Naive thymus-derived CD4-positive, alpha-beta T cell (primary cell): ENCODE measurements at regions of chr6 and their contacts with region 1.

Region 1: DNA sequence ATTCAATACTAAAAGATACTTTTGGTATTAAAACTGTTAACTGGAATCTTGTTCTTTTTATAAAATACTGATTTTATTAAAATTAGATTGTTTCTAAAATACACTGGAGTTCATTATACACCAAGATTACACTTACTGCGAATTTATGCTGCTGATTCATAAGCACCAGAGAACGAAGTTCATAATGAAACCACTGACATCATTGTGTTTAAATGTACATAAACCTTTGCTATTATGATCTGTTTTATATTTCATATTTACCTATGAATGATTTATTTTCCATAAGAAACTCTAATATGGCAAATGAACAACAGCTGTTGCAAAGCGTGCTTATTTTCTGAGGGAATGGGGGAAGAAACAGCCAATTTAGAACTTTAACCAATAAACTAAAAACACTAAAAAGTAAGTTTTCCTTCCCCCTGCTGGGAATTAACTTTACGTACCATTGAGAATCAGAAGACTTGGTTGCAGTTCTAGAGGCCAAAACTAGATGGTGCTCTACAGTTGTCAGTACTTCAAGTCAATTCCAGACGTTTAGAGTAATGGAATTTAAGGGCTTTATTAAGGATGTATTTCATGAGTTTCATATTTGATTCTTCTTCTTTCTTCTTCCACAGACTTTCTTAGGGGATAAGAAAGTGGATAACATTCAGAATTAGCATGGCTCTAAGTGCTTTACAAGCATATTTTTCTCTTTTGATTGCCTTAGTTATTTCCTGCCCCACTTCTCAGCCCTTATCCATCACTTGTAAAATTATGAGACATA is 30.8 kb upstream of the COL19A1 start:
- DNase-seq: peak in 4 of 9 donors; percentile 11 to 41 (median 26)
- ATAC-seq: peak; percentile 84
- H3K4me3 ChIP-seq: no peak overlapping the region
- H3K4me3 Mint-ChIP-seq: peak overlapping the region in 1 of 10 donors; percentile 21
- H3K27ac ChIP-seq: no peak overlapping the region
- H3K27ac Mint-ChIP-seq: no peak overlapping the region
- H3K4me1 ChIP-seq: no peaks in the 10 kb centered on the region
- H3K4me1 Mint-ChIP-seq: peaks cover 0 to 7% (median 2%) of the 10 kb centered on the region in 7 donors
- H3K27me3 ChIP-seq: no peaks in the 10 kb centered on the region
- H3K27me3 Mint-ChIP-seq: peaks cover 0 to 52% (median 11%) of the 10 kb centered on the region in 5 donors

Region 2: GRCh38 chr6:69732640-69733039 is 103.0 kb before region 1 on chr6:
- CTCF ChIA-PET with region 1: no interaction called
- POLR2A ChIA-PET with region 1: no interaction called
- intact Hi-C with region 1: loop called in 1 of 2 experiments (anchors 1 kb)
- DNase-seq: peak in 5 of 9 donors; percentile 3 to 25 (median 10)
- ATAC-seq: no peak
- H3K4me3 ChIP-seq: no peak overlapping the region
- H3K4me3 Mint-ChIP-seq: no peak overlapping the region
- H3K27ac ChIP-seq: no peak overlapping the region
- H3K27ac Mint-ChIP-seq: no peak overlapping the region
- H3K4me1 ChIP-seq: no peaks in the 10 kb centered on the region
- H3K4me1 Mint-ChIP-seq: peaks cover 0 to 9% (median 6%) of the 10 kb centered on the region in 7 donors
- H3K27me3 ChIP-seq: no peaks in the 10 kb centered on the region
- H3K27me3 Mint-ChIP-seq: no peaks in the 10 kb centered on the region

Region 3: GRCh38 chr6:69866770-69867638 is 31.4 kb after region 1 on chr6:
- CTCF ChIA-PET with region 1: no interaction called
- POLR2A ChIA-PET with region 1: interaction called, 3 read pairs
- intact Hi-C with region 1: loop called (anchors 1 to 2 kb)
- DNase-seq: peak; percentile 42 to 64 (median 55)
- ATAC-seq: peak; percentile 84
- H3K4me3 ChIP-seq: peak overlapping the region; percentile 55
- H3K4me3 Mint-ChIP-seq: peak overlapping the region; percentile 79 to 98 (median 89)
- H3K27ac ChIP-seq: peak overlapping the region; percentile 4
- H3K27ac Mint-ChIP-seq: peak overlapping the region in 7 of 9 donors; percentile 15 to 85 (median 51)
- H3K4me1 ChIP-seq: peaks cover 5 to 6% of the 10 kb centered on the region in 2 donors
- H3K4me1 Mint-ChIP-seq: peaks cover 15 to 24% (median 20%) of the 10 kb centered on the region in 7 donors
- H3K27me3 ChIP-seq: no peaks in the 10 kb centered on the region
- H3K27me3 Mint-ChIP-seq: peaks cover 8 to 66% (median 34%) of the 10 kb centered on the region in 5 donors

Region 4: GRCh38 chr6:69985180-69985579 is 149.6 kb after region 1 on chr6:
- CTCF ChIA-PET with region 1: no interaction called
- POLR2A ChIA-PET with region 1: no interaction called
- intact Hi-C with region 1: loop called in 1 of 2 experiments (anchors 10 kb)
- DNase-seq: no peak
- ATAC-seq: no peak
- H3K4me3 ChIP-seq: no peak overlapping the region
- H3K4me3 Mint-ChIP-seq: no peak overlapping the region
- H3K27ac ChIP-seq: no peak overlapping the region
- H3K27ac Mint-ChIP-seq: no peak overlapping the region
- H3K4me1 ChIP-seq: no peaks in the 10 kb centered on the region
- H3K4me1 Mint-ChIP-seq: peaks cover 0 to 4% (median 0%) of the 10 kb centered on the region in 7 donors
- H3K27me3 ChIP-seq: no peaks in the 10 kb centered on the region
- H3K27me3 Mint-ChIP-seq: no peaks in the 10 kb centered on the region

Region 5: DNA sequence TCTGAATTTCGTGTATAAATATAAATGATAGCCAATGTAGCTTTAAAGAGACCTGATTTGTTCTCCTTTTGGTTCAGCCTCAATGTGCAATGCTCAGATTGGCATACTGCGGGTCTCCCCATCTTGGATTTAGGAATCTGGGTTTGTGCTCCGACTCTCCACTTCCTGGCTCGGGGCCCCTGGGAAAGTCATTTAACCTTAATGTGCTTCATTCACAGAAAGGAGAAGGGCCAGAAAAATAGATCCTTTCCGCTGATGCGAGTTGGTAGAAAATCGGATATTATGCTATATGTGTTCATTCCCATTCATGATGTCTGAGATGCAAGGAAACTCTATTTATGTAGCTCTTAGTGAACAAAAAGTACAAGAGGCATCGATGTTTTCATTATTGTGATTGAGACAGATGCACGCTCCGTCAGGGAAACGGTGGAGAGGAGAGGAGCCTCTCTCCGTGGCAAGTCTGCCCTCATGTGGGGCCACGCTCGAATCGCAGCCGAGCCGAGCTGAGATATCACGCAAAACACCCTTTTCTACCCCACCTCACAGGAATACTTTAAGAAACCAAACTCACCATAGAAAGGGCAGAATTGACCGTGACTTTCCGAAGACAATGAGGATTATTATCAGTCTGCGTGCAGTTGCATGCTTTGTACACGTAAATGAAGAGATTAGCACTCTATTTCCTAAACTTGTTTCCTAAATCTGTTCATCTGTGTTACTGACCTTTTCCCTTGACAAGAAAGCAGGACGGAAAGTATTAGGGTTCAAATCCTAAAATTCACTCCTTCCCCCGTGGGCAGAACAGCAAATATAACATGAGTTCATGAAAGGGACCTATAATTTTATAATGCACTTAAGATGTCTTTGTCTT is 330.7 kb after region 1 on chr6:
- CTCF ChIA-PET with region 1: no interaction called
- POLR2A ChIA-PET with region 1: no interaction called
- intact Hi-C with region 1: loop called (anchors 1 to 2 kb)
- DNase-seq: peak in 4 of 9 donors; percentile 3 to 23 (median 5)
- ATAC-seq: no peak
- H3K4me3 ChIP-seq: no peak overlapping the region
- H3K4me3 Mint-ChIP-seq: peak overlapping the region in 2 of 10 donors; percentile 14 to 19
- H3K27ac ChIP-seq: no peak overlapping the region
- H3K27ac Mint-ChIP-seq: no peak overlapping the region
- H3K4me1 ChIP-seq: no peaks in the 10 kb centered on the region
- H3K4me1 Mint-ChIP-seq: peaks cover 0 to 10% (median 5%) of the 10 kb centered on the region in 7 donors
- H3K27me3 ChIP-seq: peaks cover 0 to 3% of the 10 kb centered on the region in 2 donors
- H3K27me3 Mint-ChIP-seq: peaks cover 24 to 52% (median 33%) of the 10 kb centered on the region in 5 donors